B cell (primary cell): ENCODE measurements at regions of chr17 and their contacts with region 1.

Region 1: DNA sequence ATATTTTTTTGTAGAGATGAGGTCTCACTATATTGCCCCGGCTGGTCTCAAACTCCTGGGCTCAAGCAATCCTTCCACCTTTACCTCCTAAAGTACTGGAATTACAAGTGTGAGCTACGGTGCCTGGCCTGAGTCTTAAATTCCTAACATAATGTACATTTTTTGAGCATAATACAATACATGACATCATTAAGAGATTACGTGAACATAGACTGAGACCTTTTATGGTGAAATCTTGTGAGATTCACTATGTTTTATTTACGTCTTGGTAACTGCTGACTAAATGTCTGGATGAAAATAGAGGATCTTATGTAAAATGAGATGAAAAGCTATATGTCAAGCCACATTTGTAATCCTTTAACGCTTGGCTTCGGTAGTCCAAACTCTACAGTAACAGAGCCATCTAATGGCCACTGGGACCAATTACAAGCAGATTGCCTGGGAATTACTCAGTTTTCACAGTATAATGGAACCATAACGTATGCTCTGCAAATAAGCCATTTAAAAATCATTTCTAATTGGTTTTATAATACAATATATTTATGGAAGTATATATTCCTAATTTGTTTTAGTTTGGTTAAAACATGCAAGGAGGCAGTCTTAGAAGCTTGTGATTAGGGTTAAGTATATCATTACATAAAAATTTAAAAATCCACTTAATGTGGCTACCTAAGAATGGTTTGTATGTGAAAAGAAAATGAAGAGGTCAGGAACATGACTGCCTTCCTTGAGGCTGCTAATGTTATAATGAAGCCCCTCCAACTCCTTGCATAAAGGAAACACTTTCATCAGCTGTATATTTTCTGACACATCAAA is 8.1 kb upstream of the EFCAB13 start:
- DNase-seq: peak; percentile 79
- ATAC-seq: peak; percentile 96
- H3K4me3 ChIP-seq: no peak overlapping the region
- H3K4me3 Mint-ChIP-seq: no peak overlapping the region
- H3K27ac ChIP-seq: no peak overlapping the region
- H3K27ac Mint-ChIP-seq: no peak overlapping the region
- H3K4me1 ChIP-seq: no peaks in the 10 kb centered on the region
- H3K4me1 Mint-ChIP-seq: peaks cover 6% of the 10 kb centered on the region
- H3K27me3 ChIP-seq: no peaks in the 10 kb centered on the region
- H3K27me3 Mint-ChIP-seq: no peaks in the 10 kb centered on the region
- CTCF ChIP-seq: peak; percentile 96

Region 2: GRCh38 chr17:46991617-46992016 is 324.0 kb before region 1 on chr17:
- CTCF ChIA-PET with region 1: no interaction called
- POLR2A ChIA-PET with region 1: no interaction called
- intact Hi-C with region 1: no loop called
- DNase-seq: peak; percentile 42
- ATAC-seq: peak; percentile 93
- H3K4me3 ChIP-seq: peak overlapping the region in 1 of 5 experiments; percentile 40
- H3K4me3 Mint-ChIP-seq: peak overlapping the region; percentile 32
- H3K27ac ChIP-seq: peak overlapping the region; percentile 26 to 66
- H3K27ac Mint-ChIP-seq: peak overlapping the region; percentile 90
- H3K4me1 ChIP-seq: peaks cover 22 to 38% of the 10 kb centered on the region in 2 donors
- H3K4me1 Mint-ChIP-seq: peaks cover 30% of the 10 kb centered on the region
- H3K27me3 ChIP-seq: no peaks in the 10 kb centered on the region
- H3K27me3 Mint-ChIP-seq: no peaks in the 10 kb centered on the region
- CTCF ChIP-seq: no peak

Region 3: GRCh38 chr17:47162013-47162622 is 153.5 kb before region 1 on chr17:
- CTCF ChIA-PET with region 1: interaction called, 21 read pairs
- POLR2A ChIA-PET with region 1: no interaction called
- intact Hi-C with region 1: no loop called
- DNase-seq: peak; percentile 64
- ATAC-seq: peak; percentile 24
- H3K4me3 ChIP-seq: peak overlapping the region; percentile 19 to 72 (median 42)
- H3K4me3 Mint-ChIP-seq: peak overlapping the region; percentile 86
- H3K27ac ChIP-seq: peak overlapping the region; percentile 74 to 86
- H3K27ac Mint-ChIP-seq: peak overlapping the region; percentile 91
- H3K4me1 ChIP-seq: peaks cover 14 to 19% of the 10 kb centered on the region in 2 donors
- H3K4me1 Mint-ChIP-seq: peaks cover 32% of the 10 kb centered on the region
- H3K27me3 ChIP-seq: no peaks in the 10 kb centered on the region
- H3K27me3 Mint-ChIP-seq: no peaks in the 10 kb centered on the region
- CTCF ChIP-seq: no peak

Region 4: DNA sequence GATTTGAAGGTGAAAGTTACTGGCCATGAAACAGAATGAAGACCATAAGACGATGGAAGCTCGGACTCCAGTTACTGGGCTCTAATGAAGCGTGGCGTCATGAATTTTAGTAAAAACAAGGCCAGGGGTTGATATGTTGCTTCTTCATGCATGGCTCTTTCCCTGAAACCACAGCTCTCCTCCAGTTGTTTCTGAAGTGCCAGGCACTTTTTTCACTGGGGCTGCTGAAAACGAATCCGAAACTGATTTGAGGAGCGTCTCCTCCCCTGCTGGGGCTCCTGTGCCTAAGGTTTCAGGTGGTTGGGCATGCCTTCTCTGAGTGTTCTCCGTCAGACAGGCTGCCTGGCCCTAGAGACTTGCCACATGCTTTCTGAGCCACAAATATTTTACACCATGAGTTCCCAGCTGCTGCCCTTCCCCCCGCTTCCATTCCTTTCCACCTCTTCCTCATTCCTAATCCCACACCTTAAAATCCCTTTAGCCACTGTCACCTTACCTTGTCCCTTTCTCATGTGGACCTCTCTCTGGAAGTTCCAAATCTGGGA is 110.2 kb before region 1 on chr17:
- CTCF ChIA-PET with region 1: interaction called, 37 read pairs
- POLR2A ChIA-PET with region 1: interaction called, 6 read pairs
- intact Hi-C with region 1: no loop called
- DNase-seq: peak; percentile 87
- ATAC-seq: peak; percentile 69
- H3K4me3 ChIP-seq: peak overlapping the region; percentile 30 to 56 (median 45)
- H3K4me3 Mint-ChIP-seq: peak overlapping the region; percentile 87
- H3K27ac ChIP-seq: peak overlapping the region; percentile 96 to 97
- H3K27ac Mint-ChIP-seq: peak overlapping the region; percentile 99
- H3K4me1 ChIP-seq: peaks cover 67 to 74% of the 10 kb centered on the region in 2 donors
- H3K4me1 Mint-ChIP-seq: peaks cover 73% of the 10 kb centered on the region
- H3K27me3 ChIP-seq: no peaks in the 10 kb centered on the region
- H3K27me3 Mint-ChIP-seq: no peaks in the 10 kb centered on the region
- CTCF ChIP-seq: no peak

Region 5: DNA sequence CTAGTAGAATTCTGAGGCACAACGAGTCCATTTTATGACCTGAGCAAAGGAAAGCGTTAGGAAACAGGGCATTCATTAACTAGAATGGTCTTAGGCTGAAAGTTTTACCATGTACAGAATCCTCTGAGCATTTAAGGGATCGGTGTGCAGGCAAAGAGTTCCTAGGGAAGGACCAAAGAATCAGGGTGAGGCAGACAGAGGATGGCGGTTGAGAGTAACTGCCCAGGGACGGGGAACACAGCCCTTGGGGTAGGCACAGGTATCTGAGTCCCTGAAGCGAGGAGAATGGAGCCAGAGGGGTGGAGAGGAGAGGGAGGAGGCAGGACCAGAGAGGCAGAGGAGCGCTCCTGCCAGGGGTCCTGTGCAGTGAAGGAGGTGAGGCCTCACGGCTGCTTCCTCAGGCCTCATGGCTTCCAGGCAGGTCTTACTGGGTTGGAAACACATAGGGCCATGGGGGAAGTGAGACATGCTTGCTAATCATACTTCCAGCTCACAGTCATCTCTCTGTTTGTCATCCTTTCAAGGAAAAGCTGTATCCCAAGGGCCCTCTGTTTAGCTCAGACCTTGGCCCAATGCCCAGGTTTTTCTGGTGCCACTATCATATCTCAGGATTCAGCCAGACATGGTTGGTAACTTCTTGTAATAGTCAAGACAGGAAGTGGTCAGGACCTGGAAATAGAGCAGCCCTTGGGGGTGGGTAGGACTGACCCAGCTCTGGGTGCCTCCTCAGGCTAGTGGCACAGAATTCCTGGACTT is 75.9 kb before region 1 on chr17:
- CTCF ChIA-PET with region 1: interaction called, 226 read pairs
- POLR2A ChIA-PET with region 1: interaction called, 4 read pairs
- intact Hi-C with region 1: no loop called
- DNase-seq: no peak
- ATAC-seq: peak; percentile 33
- H3K4me3 ChIP-seq: no peak overlapping the region
- H3K4me3 Mint-ChIP-seq: no peak overlapping the region
- H3K27ac ChIP-seq: no peak overlapping the region
- H3K27ac Mint-ChIP-seq: no peak overlapping the region
- H3K4me1 ChIP-seq: peaks cover 25 to 26% of the 10 kb centered on the region in 2 donors
- H3K4me1 Mint-ChIP-seq: peaks cover 28% of the 10 kb centered on the region
- H3K27me3 ChIP-seq: no peaks in the 10 kb centered on the region
- H3K27me3 Mint-ChIP-seq: no peaks in the 10 kb centered on the region
- CTCF ChIP-seq: no peak

Region 6: GRCh38 chr17:47279062-47279736 is 36.5 kb before region 1 on chr17:
- CTCF ChIA-PET with region 1: interaction called, 25 read pairs
- POLR2A ChIA-PET with region 1: no interaction called
- intact Hi-C with region 1: loop called (anchors 5 kb)
- DNase-seq: peak; percentile 85
- ATAC-seq: peak; percentile 94
- H3K4me3 ChIP-seq: peak overlapping the region in 3 of 5 experiments; percentile 4 to 30 (median 20)
- H3K4me3 Mint-ChIP-seq: peak overlapping the region; percentile 77
- H3K27ac ChIP-seq: peak overlapping the region; percentile 66 to 77
- H3K27ac Mint-ChIP-seq: peak overlapping the region; percentile 84
- H3K4me1 ChIP-seq: peaks cover 45 to 67% of the 10 kb centered on the region in 2 donors
- H3K4me1 Mint-ChIP-seq: peaks cover 69% of the 10 kb centered on the region
- H3K27me3 ChIP-seq: no peaks in the 10 kb centered on the region
- H3K27me3 Mint-ChIP-seq: no peaks in the 10 kb centered on the region
- CTCF ChIP-seq: no peak

Region 7: GRCh38 chr17:47305302-47305923 is 10.2 kb before region 1 on chr17:
- CTCF ChIA-PET with region 1: interaction called, 10 read pairs
- POLR2A ChIA-PET with region 1: no interaction called
- intact Hi-C with region 1: no loop called
- DNase-seq: no peak
- ATAC-seq: no peak
- H3K4me3 ChIP-seq: no peak overlapping the region
- H3K4me3 Mint-ChIP-seq: no peak overlapping the region
- H3K27ac ChIP-seq: no peak overlapping the region
- H3K27ac Mint-ChIP-seq: no peak overlapping the region
- H3K4me1 ChIP-seq: peaks cover 6% of the 10 kb centered on the region in 2 donors
- H3K4me1 Mint-ChIP-seq: peaks cover 12% of the 10 kb centered on the region
- H3K27me3 ChIP-seq: no peaks in the 10 kb centered on the region
- H3K27me3 Mint-ChIP-seq: no peaks in the 10 kb centered on the region
- CTCF ChIP-seq: no peak

Region 8: DNA sequence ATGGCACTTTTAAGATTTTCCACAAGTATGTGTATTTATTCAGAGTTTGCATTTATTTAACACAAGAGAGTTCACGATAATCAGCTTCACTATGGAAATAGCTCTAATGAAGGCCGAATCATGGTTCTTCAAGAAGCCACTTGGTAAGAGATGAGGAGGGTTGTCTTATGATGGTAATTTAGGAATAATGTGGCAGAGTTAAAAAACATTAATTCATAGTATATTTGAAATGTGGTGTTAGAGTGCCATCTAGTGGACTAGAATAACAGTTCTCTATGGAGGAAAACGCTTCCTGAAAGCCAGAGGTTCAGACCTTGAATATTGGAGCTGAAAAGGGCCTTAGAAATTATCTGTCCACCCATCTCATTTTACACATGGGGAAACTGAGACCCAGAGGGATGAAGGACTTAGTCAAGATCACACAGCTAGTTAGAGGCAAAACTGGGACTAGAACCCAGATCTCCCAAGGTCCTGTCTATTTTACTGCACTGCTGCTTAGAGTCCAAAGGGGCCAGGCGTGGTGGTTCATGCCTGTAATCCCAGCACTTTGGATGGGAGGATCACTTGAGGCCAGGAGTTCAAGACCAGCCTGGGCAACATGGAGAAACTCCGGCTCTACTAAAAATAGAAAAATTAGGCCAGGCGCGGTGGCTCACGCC is 300.2 kb after region 1 on chr17:
- CTCF ChIA-PET with region 1: interaction called, 16 read pairs
- POLR2A ChIA-PET with region 1: no interaction called
- intact Hi-C with region 1: loop called (anchors 1 kb)
- DNase-seq: peak; percentile 72
- ATAC-seq: peak; percentile 21
- H3K4me3 ChIP-seq: no peak overlapping the region
- H3K4me3 Mint-ChIP-seq: no peak overlapping the region
- H3K27ac ChIP-seq: no peak overlapping the region
- H3K27ac Mint-ChIP-seq: no peak overlapping the region
- H3K4me1 ChIP-seq: no peaks in the 10 kb centered on the region
- H3K4me1 Mint-ChIP-seq: no peaks in the 10 kb centered on the region
- H3K27me3 ChIP-seq: no peaks in the 10 kb centered on the region
- H3K27me3 Mint-ChIP-seq: no peaks in the 10 kb centered on the region
- CTCF ChIP-seq: peak; percentile 90